ENCODE measurements at regions of chr7 and their contacts with region 1.

Region 1: DNA sequence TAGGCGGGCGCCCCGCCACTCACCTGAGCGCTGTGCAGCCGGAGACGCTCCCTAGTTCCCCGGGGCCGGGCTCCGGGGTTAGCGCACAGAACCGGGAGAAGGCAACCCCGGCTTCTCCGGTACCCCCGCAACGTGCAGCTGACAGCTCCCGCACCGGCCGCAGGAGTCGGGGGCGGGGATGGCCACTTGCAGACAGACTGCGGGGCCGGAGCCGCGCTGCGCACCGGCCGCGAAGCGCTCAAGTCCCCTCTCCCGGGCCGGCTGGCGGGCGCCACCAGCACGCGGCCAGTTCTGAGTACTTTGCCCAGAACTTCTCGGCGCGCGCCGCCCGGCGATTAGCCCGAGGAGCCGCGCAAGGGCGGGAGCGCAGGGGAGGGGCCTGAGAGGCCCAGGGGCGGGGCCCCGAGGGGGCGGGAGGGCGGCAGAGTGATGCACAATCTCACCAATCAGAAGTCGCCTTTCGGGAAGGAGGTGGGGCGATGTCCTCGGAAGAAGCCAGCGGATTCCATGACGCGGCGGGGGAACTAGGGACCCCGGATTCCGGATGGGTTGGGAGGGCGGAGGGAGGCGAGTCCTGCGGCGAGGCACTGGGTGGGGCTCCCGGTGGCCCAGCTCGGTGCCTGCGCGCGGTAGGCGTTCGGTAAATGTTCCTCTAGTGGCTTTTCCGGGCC is at the start of gene OSBPL3:
- DNase-seq: peak; percentile 62 to 98 (median 96)
- H3K4me3 ChIP-seq: peak within 1 kb of the TSS; percentile 62 to 94 (median 82)
- H3K27ac ChIP-seq: peak within 1 kb of the TSS; percentile 39 to 97 (median 86)
- H3K27me3 ChIP-seq: no peaks in the 10 kb centered on the region
- CTCF ChIP-seq: peak in 20 of 56 donors; percentile 4 to 55 (median 22)
- total RNA-seq, gene OSBPL3: 13.5 to 49.3 (median 28.3) TPM

Region 2: DNA sequence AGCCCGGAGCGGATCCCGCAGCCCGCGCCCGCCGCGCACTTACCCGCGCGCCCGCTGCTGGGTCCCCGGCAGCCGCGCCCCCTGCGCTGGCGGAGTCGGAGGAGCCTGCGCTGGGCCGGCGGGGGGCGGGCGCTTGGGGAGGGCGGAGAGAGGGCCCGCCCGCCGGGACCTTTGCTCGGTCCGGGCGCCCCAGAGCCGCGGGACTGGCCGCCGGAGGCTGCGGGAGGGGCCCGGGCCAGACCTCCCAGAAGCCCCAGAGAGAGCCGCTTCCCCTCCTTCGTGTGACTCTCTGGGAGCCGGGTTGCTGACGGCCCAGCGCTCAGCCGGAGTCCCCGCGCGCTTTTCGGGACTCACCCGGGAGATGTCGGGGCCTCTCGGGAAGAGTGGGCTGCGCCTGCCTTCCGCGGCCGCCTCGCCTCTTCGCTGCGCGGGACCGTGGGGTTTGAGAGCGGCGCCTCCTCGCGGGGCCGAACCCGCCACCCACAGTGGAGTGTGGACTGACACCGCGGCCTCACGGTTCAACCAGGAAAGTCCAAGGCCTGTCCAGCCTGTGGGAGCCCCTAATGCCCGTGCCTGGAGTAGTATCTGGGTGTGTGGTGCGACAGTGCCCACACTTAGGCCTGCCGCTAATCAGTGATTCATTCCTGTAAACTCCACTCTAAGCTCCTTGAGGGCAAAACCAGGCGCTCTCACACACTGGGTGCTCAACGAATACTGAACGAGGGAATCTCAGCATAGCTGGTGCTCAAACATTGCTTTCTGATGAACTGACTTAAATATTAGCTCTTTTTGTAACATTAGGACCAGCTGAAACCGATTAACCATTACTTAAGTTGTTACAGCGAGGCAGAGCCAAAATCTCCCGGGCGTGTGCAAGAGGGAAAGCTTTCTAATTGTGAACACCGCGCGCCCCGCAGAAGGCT is 222.4 kb before region 1 on chr7 and contains the start of gene GSDME:
- intact Hi-C with region 1: loop called in 1 of 2 experiments (anchors 5 kb)
- DNase-seq: peak in 7 of 10 donors; percentile 29 to 72 (median 44)
- H3K4me3 ChIP-seq: peak within 1 kb of the TSS; percentile 55 to 87 (median 76)
- H3K27ac ChIP-seq: peak within 1 kb of the TSS; percentile 39 to 95 (median 87)
- H3K27me3 ChIP-seq: no peaks in the 10 kb centered on the region
- CTCF ChIP-seq: peak in 12 of 56 donors; percentile 2 to 30 (median 8)
- total RNA-seq, gene GSDME: 12.2 to 43.7 (median 24.5) TPM

Region 3: GRCh38 chr7:24819916-24820689 is 159.9 kb before region 1 on chr7:
- intact Hi-C with region 1: loop called (anchors 2 to 5 kb)
- DNase-seq: peak; percentile 32 to 87 (median 76)
- H3K4me3 ChIP-seq: peak overlapping the region in 5 of 59 donors; percentile 1 to 10 (median 8)
- H3K27ac ChIP-seq: peak overlapping the region in 44 of 59 donors; percentile 0 to 77 (median 52)
- H3K27me3 ChIP-seq: no peaks in the 10 kb centered on the region
- CTCF ChIP-seq: peak; percentile 83 to 97 (median 90)

Region 4: DNA sequence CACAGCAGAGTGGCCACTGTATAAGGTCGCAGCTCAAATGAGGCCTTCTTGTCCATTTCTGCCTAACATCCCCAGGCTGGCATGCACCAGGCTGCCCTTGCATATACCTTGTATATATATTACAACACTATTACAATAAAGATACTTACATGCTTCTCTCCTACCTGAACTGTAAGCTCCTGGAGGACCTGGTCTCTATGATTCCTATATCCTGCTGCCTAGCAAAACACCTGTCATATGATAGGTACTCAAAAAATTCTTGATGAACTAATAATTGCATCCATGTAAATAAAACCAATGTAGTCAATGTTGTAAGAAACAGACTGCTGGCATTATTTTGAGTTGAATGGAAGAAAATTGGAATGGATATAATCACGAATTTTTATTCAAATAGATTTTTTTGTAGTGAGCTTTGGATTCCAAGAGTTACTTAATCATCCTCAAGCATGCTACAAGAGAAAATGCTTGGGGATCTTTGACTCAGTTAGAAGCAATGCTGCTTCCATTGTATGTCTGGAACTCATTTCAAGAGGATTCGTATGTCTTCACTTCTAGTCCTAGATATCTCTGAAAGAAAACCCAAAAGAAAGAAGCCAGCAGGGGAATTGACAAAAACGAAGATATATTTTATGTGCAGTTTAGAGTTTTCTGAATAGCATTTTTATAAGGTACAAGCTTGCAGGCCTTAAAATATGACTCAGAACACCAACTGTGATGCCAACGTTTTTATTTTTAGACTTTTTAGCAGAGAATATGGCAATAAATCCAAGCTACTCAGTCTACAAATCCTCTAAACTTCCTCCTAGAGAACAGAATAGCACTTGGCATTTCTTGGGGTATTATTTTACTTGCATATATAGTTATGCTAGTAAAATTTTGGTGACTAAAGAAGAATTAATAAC is 53.1 kb before region 1 on chr7:
- intact Hi-C with region 1: loop called in 1 of 2 experiments (anchors 5 kb)
- DNase-seq: no peak
- H3K4me3 ChIP-seq: no peak overlapping the region
- H3K27ac ChIP-seq: peak overlapping the region in 54 of 59 donors; percentile 1 to 87 (median 50)
- H3K27me3 ChIP-seq: no peaks in the 10 kb centered on the region
- CTCF ChIP-seq: no peak

Region 5: GRCh38 chr7:25069900-25070443 is 90.0 kb after region 1 on chr7:
- intact Hi-C with region 1: loop called (anchors 5 kb)
- DNase-seq: peak in 2 of 10 donors; percentile 19 to 50
- H3K4me3 ChIP-seq: peak overlapping the region in 55 of 59 donors; percentile 23 to 69 (median 49)
- H3K27ac ChIP-seq: peak overlapping the region in 5 of 59 donors; percentile 20 to 75 (median 69)
- H3K27me3 ChIP-seq: no peaks in the 10 kb centered on the region
- CTCF ChIP-seq: peak; percentile 87 to 100 (median 95)